ENCODE measurements at regions of chr9 and their contacts with region 1.

Region 1: DNA sequence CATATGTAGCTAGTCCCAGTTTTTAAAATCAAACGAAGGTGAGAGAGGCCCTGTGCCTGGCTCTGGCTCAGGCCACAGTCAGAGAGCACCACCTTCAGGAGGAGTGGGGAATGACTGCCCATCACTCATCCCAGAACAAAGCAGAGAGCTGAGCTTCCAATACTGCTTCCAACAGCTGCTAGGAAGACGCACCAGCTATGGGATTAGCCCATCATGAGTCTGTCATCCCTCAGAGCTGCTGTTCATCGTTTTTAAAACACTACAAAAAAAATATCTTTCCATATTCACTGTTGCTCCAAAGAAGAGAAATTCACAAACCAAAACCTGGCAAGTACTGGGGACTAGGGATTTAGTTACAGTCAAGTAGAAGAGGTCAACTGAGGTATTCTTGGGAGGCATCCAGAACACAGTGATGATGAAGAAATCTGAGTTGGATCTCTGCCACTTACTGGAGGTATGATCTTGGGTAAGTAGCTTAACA is 102.4 kb downstream of the CDK5RAP2 start:
- H3K4me3 ChIP-seq: no peak overlapping the region
- H3K27ac ChIP-seq: no peak overlapping the region
- H3K4me1 ChIP-seq: peaks cover 2% of the 10 kb centered on the region; the same call in 1 of the 2 replicates
- CTCF ChIP-seq: peak; percentile 58

Region 2: GRCh38 chr9:119556129-119556875 is 921.3 kb before region 1 on chr9:
- CTCF ChIA-PET with region 1: interaction called, 10 read pairs
- POLR2A ChIA-PET with region 1: no interaction called
- H3K4me3 ChIP-seq: no peak overlapping the region
- H3K27ac ChIP-seq: no peak overlapping the region
- H3K4me1 ChIP-seq: no peaks in the 10 kb centered on the region
- CTCF ChIP-seq: no peak

Region 3: GRCh38 chr9:120402741-120403542 is 74.6 kb before region 1 on chr9:
- CTCF ChIA-PET with region 1: no interaction called
- POLR2A ChIA-PET with region 1: no interaction called
- H3K4me3 ChIP-seq: no peak overlapping the region
- H3K27ac ChIP-seq: no peak overlapping the region
- H3K4me1 ChIP-seq: no peaks in the 10 kb centered on the region
- CTCF ChIP-seq: no peak

Region 4: GRCh38 chr9:120438836-120439546 is 38.6 kb before region 1 on chr9:
- CTCF ChIA-PET with region 1: interaction called, 12 read pairs
- POLR2A ChIA-PET with region 1: no interaction called
- H3K4me3 ChIP-seq: no peak overlapping the region
- H3K27ac ChIP-seq: no peak overlapping the region
- H3K4me1 ChIP-seq: no peaks in the 10 kb centered on the region
- CTCF ChIP-seq: no peak

Region 5: GRCh38 chr9:120464176-120464886 is 13.2 kb before region 1 on chr9:
- CTCF ChIA-PET with region 1: interaction called, 24 read pairs
- POLR2A ChIA-PET with region 1: no interaction called
- H3K4me3 ChIP-seq: no peak overlapping the region
- H3K27ac ChIP-seq: no peak overlapping the region
- H3K4me1 ChIP-seq: no peaks in the 10 kb centered on the region
- CTCF ChIP-seq: no peak

Region 6: DNA sequence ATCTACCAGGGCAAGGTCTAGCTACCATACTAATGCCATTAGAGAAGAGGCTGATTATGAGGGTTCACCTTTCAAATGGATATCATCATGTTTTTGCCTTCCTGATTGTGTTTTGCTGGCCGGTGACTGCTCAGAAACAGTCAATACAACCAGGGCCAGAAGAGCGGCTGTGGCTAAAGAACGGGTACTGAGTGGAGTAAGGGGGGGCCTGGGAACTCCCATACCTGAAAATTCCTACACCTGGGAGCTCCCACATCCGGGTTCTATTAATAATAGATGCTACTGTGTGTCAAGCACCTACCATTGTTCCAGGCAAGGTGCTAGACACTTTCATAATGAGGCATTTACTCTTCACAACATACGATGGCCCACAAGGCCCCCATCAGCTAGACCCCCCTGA is 23.2 kb after region 1 on chr9:
- CTCF ChIA-PET with region 1: interaction called, 12 read pairs
- POLR2A ChIA-PET with region 1: no interaction called
- H3K4me3 ChIP-seq: no peak overlapping the region
- H3K27ac ChIP-seq: no peak overlapping the region
- H3K4me1 ChIP-seq: no peaks in the 10 kb centered on the region
- CTCF ChIP-seq: no peak

Region 7: DNA sequence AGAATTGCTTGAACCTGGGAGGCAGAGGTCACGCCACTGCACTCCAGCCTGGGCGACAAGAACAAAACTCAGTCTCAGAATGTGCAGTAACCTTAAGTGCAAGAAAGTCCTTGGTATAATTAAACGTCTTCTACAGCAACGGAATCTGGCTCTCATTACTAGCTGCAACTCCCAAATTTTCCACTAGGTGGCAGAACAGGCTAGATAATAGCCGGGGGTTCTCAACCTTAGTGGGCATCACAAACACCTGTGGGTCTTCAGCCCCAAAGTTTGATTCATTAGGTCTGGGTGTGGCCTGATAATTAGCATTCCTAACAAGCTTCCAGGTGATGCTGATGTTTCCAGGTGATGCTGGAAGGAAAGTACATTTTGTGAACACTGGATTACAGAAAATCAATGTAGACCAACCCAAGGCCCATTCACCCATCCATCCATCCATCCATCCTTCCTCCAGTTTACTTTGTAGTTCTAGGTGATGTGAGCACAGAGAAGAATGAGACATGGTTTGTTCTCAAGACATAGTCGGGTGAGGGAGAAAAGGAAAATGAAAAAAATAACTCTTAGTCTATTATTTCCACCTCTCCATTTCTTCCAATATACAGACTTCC is 278.4 kb after region 1 on chr9:
- CTCF ChIA-PET with region 1: no interaction called
- POLR2A ChIA-PET with region 1: no interaction called
- H3K4me3 ChIP-seq: no peak overlapping the region
- H3K27ac ChIP-seq: no peak overlapping the region
- H3K4me1 ChIP-seq: no peaks in the 10 kb centered on the region
- CTCF ChIP-seq: peak; percentile 68

Measured in HEK293 (cell line).